Activated CD4-positive, alpha-beta memory T cell treated with anti-CD3 and anti-CD28 coated beads, Interleukin-2, amount 10 ng/mL, durations not matched to agents 7 days and 5 days (primary cell): ENCODE measurements at regions of chr22 and their contacts with region 1.

Region 1: GRCh38 chr22:32486656-32487390 is 12.2 kb downstream of the FBXO7 start:
- DNase-seq: no peak
- H3K4me3 Mint-ChIP-seq: no peak overlapping the region
- H3K27ac Mint-ChIP-seq: no peak overlapping the region
- H3K4me1 Mint-ChIP-seq: peaks cover 7% of the 10 kb centered on the region
- H3K27me3 Mint-ChIP-seq: no peaks in the 10 kb centered on the region

Region 2: DNA sequence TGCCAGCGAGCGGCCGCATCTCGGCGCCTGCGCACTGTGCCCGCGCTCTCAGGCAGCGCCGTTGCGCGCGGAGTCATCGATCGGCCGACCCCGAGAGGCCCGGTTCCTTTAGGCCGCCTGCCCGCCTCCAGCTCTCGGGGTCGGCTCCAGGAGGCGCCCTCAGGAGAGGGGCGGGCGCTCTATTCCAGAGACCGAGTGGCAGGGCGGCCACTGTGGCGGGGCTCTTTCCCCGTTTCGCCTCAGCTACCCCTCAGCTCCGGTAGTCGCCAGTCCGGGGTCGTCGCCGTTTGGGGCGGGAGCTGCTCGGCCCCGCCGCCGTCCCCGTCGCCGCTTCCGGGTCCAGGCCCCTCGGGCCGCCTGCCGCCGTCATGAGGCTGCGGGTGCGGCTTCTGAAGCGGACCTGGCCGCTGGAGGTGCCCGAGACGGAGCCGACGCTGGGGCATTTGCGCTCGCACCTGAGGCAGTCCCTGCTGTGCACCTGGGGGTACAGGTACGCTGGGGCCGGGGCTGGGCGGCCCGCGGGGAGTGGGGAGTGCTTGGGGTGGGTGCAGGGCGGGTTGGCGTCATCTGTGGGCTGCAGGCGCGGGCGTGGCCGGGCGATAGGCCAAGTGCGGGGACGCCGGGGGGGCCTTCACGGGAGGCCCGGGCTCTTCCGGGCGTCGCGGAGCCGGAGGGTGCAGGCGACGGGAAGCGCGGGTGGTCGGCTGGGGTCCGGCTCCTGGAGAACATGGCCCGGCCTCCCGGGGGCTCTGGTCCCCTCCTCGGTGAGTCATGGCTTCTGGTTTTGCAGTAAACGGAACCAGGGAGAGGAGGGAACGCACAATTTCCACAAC is 12.0 kb before region 1 on chr22 and contains the start of gene FBXO7:
- CTCF ChIA-PET with region 1: interaction called, 7 read pairs
- POLR2A ChIA-PET with region 1: interaction called, 15 read pairs
- DNase-seq: peak; percentile 88
- H3K4me3 Mint-ChIP-seq: peak within 1 kb of the TSS; percentile 94
- H3K27ac Mint-ChIP-seq: peak within 1 kb of the TSS; percentile 90
- H3K4me1 Mint-ChIP-seq: peaks cover 24% of the 10 kb centered on the region
- H3K27me3 Mint-ChIP-seq: no peaks in the 10 kb centered on the region
- total RNA-seq, gene FBXO7: 95.4 to 97.1 TPM